GM10248 (cell line): ENCODE measurements at regions of chr18 and their contacts with region 1.

Region 1: GRCh38 chr18:54444319-54444914 is 86.7 kb downstream of the C18orf54 start:
- DNase-seq: peak; percentile 22
- CTCF ChIP-seq: peak; percentile 73

Region 2: GRCh38 chr18:54423831-54424230 is 20.6 kb before region 1 on chr18:
- CTCF ChIA-PET with region 1: interaction called, 10 read pairs
- POLR2A ChIA-PET with region 1: no interaction called
- DNase-seq: no peak
- CTCF ChIP-seq: no peak

Region 3: GRCh38 chr18:54671291-54671881 is 227.0 kb after region 1 on chr18:
- CTCF ChIA-PET with region 1: interaction called, 42 read pairs
- POLR2A ChIA-PET with region 1: no interaction called
- DNase-seq: peak; percentile 26
- CTCF ChIP-seq: peak; percentile 53